Activated CD4-positive, alpha-beta T cell treated with anti-CD3 and anti-CD28 coated beads for 36 hours (primary cell): ENCODE measurements at regions of chrX and their contacts with region 1.

Region 1: DNA sequence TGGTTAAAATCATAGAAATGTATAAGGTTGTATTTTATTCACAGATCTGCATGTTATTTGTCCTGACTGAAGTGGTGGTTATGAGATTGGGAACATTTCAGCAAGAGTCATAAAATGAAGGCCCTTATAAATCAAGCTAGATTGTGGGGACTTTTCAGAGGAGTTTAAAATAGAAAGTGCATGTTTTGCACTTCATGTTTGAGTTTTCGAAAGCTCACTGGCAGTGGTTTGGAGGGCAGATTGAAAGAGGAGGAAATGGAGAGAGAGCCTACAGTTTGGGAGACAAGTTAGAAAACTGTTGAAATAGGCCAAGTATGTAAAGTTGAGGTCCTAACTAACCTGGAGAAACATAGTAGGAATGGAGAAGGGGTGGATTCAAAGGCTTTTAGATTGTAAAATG is 124.9 kb downstream of the KDM6A start:
- DNase-seq: no peak
- ATAC-seq: peak; percentile 32
- H3K4me3 Mint-ChIP-seq: peak overlapping the region; percentile 13
- H3K27ac Mint-ChIP-seq: peak overlapping the region; percentile 85
- H3K4me1 Mint-ChIP-seq: peaks cover 66% of the 10 kb centered on the region
- H3K27me3 Mint-ChIP-seq: no peaks in the 10 kb centered on the region

Region 2: DNA sequence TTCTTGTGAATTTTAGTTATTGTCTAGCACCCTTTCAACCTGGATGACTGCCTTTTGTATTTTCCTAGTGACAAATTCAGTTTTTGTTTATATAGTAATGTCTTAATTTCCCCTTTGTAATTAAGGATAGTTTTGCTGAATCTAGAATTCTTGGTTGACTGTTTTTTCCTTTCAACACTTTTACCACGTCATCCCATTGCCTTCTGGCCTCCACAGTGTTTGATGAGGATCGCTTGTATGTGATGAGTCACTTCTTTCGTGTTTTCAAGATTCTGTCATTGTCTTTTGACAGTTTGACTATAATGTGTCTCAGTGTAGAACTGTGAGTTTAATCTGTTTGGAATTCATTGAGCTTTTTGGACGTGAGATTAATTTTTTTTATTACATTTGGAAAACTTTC is 94.8 kb before region 1 on chrX:
- CTCF ChIA-PET with region 1: no interaction called
- POLR2A ChIA-PET with region 1: no interaction called
- intact Hi-C with region 1: loop called in 1 of 2 experiments (anchors 2 kb)
- DNase-seq: peak; percentile 35
- ATAC-seq: peak; percentile 81
- H3K4me3 Mint-ChIP-seq: no peak overlapping the region
- H3K27ac Mint-ChIP-seq: peak overlapping the region; percentile 87
- H3K4me1 Mint-ChIP-seq: peaks cover 65% of the 10 kb centered on the region
- H3K27me3 Mint-ChIP-seq: no peaks in the 10 kb centered on the region

Region 3: GRCh38 chrX:45017946-45018345 is 20.1 kb after region 1 on chrX:
- CTCF ChIA-PET with region 1: no interaction called
- POLR2A ChIA-PET with region 1: no interaction called
- intact Hi-C with region 1: no loop called
- DNase-seq: no peak
- ATAC-seq: no peak
- H3K4me3 Mint-ChIP-seq: no peak overlapping the region
- H3K27ac Mint-ChIP-seq: no peak overlapping the region
- H3K4me1 Mint-ChIP-seq: peaks cover 28% of the 10 kb centered on the region
- H3K27me3 Mint-ChIP-seq: no peaks in the 10 kb centered on the region

Region 4: GRCh38 chrX:45070116-45071007 is 72.5 kb after region 1 on chrX:
- CTCF ChIA-PET with region 1: interaction called, 4 read pairs
- POLR2A ChIA-PET with region 1: no interaction called
- intact Hi-C with region 1: loop called (anchors 5 to 10 kb)
- DNase-seq: peak; percentile 14
- ATAC-seq: peak; percentile 69
- H3K4me3 Mint-ChIP-seq: no peak overlapping the region
- H3K27ac Mint-ChIP-seq: peak overlapping the region; percentile 78
- H3K4me1 Mint-ChIP-seq: peaks cover 48% of the 10 kb centered on the region
- H3K27me3 Mint-ChIP-seq: no peaks in the 10 kb centered on the region

Region 5: DNA sequence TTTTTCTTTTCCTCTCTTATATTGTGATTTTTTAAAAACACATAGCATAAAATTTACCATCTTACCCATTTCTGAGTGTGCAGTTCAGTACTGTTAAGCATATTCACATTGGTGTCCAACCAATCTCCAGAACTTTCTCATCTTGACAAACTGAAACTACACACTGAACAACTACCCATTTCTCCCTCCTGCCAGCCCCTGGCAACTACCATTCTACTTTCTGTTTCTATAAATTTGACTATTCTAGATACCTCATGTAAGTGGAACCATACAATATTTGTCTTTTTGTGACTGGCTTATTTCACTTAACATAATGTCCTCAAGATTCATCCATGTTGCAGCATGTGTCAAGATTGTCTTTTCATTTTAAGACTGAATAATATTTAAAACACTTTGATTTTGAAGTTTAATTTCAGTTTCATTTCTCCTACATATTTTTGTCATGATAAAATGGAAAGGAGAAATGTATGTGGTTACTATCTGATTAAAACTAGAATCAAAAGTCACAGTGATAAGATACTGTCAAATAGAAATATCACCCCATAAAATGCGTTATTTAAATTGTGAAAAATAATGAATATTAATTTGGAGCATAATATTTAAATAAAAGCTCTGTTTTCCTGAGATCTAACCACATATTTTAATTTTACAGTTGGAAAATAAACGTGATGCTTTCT is 80.0 kb after region 1 on chrX:
- CTCF ChIA-PET with region 1: no interaction called
- POLR2A ChIA-PET with region 1: no interaction called
- intact Hi-C with region 1: loop called (anchors 5 to 10 kb)
- DNase-seq: peak; percentile 24
- ATAC-seq: peak; percentile 94
- H3K4me3 Mint-ChIP-seq: peak overlapping the region; percentile 8
- H3K27ac Mint-ChIP-seq: peak overlapping the region; percentile 86
- H3K4me1 Mint-ChIP-seq: peaks cover 35% of the 10 kb centered on the region
- H3K27me3 Mint-ChIP-seq: no peaks in the 10 kb centered on the region